Activated naive CD4-positive, alpha-beta T cell treated with anti-CD3 and anti-CD28 coated beads for 36 hours (primary cell): ENCODE measurements at regions of chr5 and their contacts with region 1.

Region 1: DNA sequence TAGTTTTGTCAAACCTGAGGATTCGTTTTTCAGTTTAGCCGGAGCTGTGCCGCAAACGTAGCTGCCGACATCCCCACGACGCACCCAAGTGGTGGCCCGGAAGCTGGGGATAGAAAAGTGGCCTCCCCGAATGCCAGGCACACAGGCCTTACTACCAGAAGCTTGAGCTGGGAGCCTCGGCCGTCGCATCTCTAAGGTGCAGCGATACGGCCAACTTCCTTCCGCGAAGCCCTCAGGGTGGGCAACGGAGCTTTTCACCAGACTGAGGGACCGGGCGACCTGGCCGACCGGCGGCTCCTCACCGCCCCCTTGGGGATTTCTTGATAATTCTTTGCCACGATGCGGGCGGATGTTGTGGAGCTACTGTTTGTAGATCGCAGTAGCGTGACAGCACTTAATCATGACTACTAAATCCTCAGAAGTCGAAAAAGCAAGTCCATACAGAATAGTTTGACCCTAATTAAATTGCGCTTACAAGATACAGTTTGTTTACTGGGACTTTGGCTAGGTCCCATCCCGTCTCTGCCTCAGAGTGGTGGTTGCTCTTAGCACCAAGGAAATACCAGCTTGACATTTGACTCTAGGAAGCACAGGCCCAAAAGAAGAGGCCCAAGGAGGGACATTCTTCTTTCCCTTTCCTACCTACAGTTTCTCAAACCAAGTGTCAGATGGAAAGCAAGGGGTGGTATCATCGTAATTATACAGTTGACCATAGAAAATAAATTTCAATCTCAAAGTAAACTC is 613 bp upstream of the TMEM267 start:
- DNase-seq: peak; percentile 92
- H3K4me3 Mint-ChIP-seq: peak overlapping the region; percentile 97
- H3K27ac Mint-ChIP-seq: peak overlapping the region; percentile 99
- H3K4me1 Mint-ChIP-seq: peaks cover 45% of the 10 kb centered on the region
- H3K27me3 Mint-ChIP-seq: no peaks in the 10 kb centered on the region

Region 2: GRCh38 chr5:41924872-41925554 is 1559.3 kb before region 1 on chr5 and contains the start of gene FBXO4:
- CTCF ChIA-PET with region 1: no interaction called
- intact Hi-C with region 1: loop called (anchors 1 kb)
- DNase-seq: peak; percentile 89
- H3K4me3 Mint-ChIP-seq: peak within 1 kb of the TSS; percentile 85
- H3K27ac Mint-ChIP-seq: peak within 1 kb of the TSS; percentile 94
- H3K4me1 Mint-ChIP-seq: peaks cover 18% of the 10 kb centered on the region
- H3K27me3 Mint-ChIP-seq: no peaks in the 10 kb centered on the region
- total RNA-seq, gene FBXO4: 16.1 to 19.1 TPM

Region 3: DNA sequence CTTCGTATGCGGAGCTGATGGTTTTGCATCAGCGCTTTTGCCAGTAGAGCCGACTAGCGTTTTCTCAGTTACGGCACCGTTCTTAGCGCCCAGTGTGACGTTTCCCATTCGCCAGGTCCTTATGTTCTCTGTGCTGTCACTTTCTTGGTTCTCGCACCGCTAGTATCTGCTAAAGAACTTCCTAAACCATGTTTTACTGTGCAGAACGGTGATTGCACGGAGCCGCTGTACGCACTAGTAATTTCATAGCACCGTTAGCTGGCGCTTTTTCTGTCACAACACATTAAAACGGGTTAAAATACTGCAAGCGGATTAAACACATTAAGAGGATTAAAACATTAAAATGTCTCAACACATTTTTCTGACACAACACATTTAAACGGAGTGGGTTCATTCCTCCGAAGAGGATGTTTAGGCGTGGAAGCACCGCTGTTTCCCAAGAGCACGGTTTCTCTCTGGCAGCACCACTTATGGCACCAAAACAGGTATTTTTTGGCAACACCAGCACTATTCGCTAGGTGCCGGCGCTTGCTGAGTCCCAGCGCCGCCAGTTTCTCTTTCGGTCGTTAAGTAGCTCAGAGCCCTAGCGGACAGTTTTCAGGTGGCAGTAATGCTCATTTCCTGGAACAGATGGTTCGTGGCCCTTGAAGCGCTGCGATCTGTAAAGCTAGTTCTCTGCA is 464.5 kb before region 1 on chr5:
- CTCF ChIA-PET with region 1: no interaction called
- intact Hi-C with region 1: loop called (anchors 1 kb)
- DNase-seq: peak; percentile 90
- H3K4me3 Mint-ChIP-seq: peak overlapping the region; percentile 97
- H3K27ac Mint-ChIP-seq: peak overlapping the region; percentile 99
- H3K4me1 Mint-ChIP-seq: peaks cover 37% of the 10 kb centered on the region
- H3K27me3 Mint-ChIP-seq: no peaks in the 10 kb centered on the region

Region 4: DNA sequence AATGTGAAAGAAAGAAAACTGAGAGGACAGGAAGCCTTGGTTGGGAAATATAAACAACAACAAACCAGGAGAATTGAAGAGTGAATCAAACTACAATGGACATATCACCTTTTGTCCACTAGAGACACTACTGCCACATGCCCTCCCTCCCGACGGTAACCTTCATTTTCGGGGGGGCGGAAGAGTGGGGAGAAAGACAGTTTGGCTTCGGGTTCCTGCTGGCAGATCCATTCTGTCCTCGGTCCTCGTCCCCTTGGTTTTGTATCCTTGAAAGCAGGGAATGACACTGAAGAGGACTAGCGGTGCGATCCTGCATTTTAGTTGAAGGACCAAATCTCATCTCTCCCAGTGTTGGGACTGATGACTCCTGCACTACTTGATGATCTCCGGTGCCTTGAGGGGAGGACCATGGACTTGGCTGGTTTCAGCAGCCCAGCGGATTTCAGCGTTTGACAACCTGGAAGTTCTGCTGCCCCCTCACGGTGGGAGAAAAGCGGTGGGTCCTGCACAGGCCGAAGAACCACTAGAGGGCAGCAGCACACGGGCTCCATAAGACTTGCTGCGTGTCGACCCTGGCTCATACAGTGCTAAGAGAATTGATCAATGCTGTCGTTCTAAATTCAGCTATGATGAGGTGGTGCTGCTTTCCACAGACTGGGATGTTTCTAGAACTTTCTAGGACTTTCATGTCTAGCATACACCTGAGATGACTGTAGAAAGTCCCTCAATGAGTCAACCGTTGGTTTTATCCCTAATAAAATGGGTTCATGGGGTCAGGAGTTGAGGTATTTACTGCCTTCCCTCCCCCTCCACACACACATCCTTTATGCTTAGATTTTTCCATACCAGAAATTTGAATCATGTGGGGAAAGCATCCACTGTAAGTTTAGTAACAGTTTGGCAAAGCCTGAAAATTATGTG is 378.6 kb before region 1 on chr5:
- CTCF ChIA-PET with region 1: interaction called, 4 read pairs
- intact Hi-C with region 1: loop called (anchors 1 kb)
- DNase-seq: peak; percentile 92
- H3K4me3 Mint-ChIP-seq: peak overlapping the region; percentile 81
- H3K27ac Mint-ChIP-seq: peak overlapping the region; percentile 87
- H3K4me1 Mint-ChIP-seq: peaks cover 42% of the 10 kb centered on the region
- H3K27me3 Mint-ChIP-seq: no peaks in the 10 kb centered on the region

Region 5: GRCh38 chr5:43227655-43228054 is 256.6 kb before region 1 on chr5:
- CTCF ChIA-PET with region 1: interaction called, 3 read pairs
- intact Hi-C with region 1: loop called (anchors 1 kb)
- DNase-seq: no peak
- H3K4me3 Mint-ChIP-seq: no peak overlapping the region
- H3K27ac Mint-ChIP-seq: no peak overlapping the region
- H3K4me1 Mint-ChIP-seq: no peaks in the 10 kb centered on the region
- H3K27me3 Mint-ChIP-seq: no peaks in the 10 kb centered on the region

Region 6: GRCh38 chr5:43556857-43557542 is 72.7 kb after region 1 on chr5 and contains the start of gene PAIP1:
- CTCF ChIA-PET with region 1: interaction called, 12 read pairs
- intact Hi-C with region 1: loop called (anchors 1 kb)
- DNase-seq: peak; percentile 82
- H3K4me3 Mint-ChIP-seq: peak within 1 kb of the TSS; percentile 84
- H3K27ac Mint-ChIP-seq: peak within 1 kb of the TSS; percentile 95
- H3K4me1 Mint-ChIP-seq: peaks cover 17% of the 10 kb centered on the region
- H3K27me3 Mint-ChIP-seq: peaks cover 3% of the 10 kb centered on the region
- total RNA-seq, gene PAIP1: 41.7 to 42.9 TPM